HepG2 (cell line): ENCODE measurements at regions of chr7 and their contacts with region 1.

Region 1: GRCh38 chr7:130982160-130982638 is 248.2 kb upstream of the KLF14 start:
- DNase-seq: peak; percentile 56
- ATAC-seq: peak; percentile 79
- H3K4me3 ChIP-seq: no peak overlapping the region
- H3K27ac ChIP-seq: no peak overlapping the region
- H3K4me1 ChIP-seq: 0 out of 2 replicates have a peak, but pooled peaks cover 2% of the 10 kb centered on the region
- H3K27me3 ChIP-seq: no peaks in the 10 kb centered on the region
- CTCF ChIP-seq: peak; percentile 80
- EP300 ChIP-seq: no peak
- POLR2A ChIP-seq: no peak
- RAD21 ChIP-seq: peak; percentile 41; the same call in 1 of the 2 replicates

Region 2: GRCh38 chr7:131007394-131008330 is 25.5 kb after region 1 on chr7:
- CTCF ChIA-PET with region 1: interaction called, 12 read pairs
- POLR2A ChIA-PET with region 1: no interaction called
- in situ Hi-C with region 1: no loop called
- intact Hi-C with region 1: loop called (anchors 1 kb)
- DNase-seq: peak; percentile 70
- ATAC-seq: peak; percentile 72
- H3K4me3 ChIP-seq: no peak overlapping the region
- H3K27ac ChIP-seq: no peak overlapping the region
- H3K4me1 ChIP-seq: peaks cover 20% of the 10 kb centered on the region; the same call in 1 of the 2 replicates
- H3K27me3 ChIP-seq: no peaks in the 10 kb centered on the region
- CTCF ChIP-seq: peak; percentile 69
- EP300 ChIP-seq: no peak
- POLR2A ChIP-seq: no peak
- RAD21 ChIP-seq: no peak

Region 3: DNA sequence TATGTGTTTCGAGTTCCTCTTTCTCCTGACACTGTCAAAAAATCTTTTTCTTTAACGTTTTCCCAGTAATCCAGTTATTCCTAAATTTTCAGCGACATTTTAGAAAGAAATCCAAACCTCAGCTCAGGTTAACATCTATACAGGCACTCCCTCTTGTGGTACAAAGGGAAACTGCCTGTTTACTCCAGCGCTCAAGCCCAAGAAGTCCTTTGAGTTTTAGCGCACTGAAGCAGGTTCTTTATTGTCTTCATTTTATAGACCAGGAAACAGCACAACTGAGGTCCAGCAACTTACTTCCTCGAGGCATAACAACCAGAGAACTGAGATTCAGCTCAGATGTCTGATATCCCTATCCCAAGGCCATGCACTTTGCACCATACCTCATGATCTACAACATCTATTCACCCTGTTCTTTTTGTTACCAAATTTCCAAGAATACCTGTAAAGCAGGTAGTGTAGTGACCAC is 58.3 kb after region 1 on chr7:
- CTCF ChIA-PET with region 1: interaction called, 15 read pairs
- POLR2A ChIA-PET with region 1: no interaction called
- in situ Hi-C with region 1: no loop called
- intact Hi-C with region 1: loop called (anchors 1 kb)
- DNase-seq: peak; percentile 57
- ATAC-seq: peak; percentile 75
- H3K4me3 ChIP-seq: no peak overlapping the region
- H3K27ac ChIP-seq: no peak overlapping the region
- H3K4me1 ChIP-seq: peaks cover 15% of the 10 kb centered on the region
- H3K27me3 ChIP-seq: no peaks in the 10 kb centered on the region
- CTCF ChIP-seq: peak; percentile 82
- EP300 ChIP-seq: no peak
- POLR2A ChIP-seq: no peak
- RAD21 ChIP-seq: peak; percentile 65